Right ventricle myocardium superior (tissue), 1 donor: ENCODE measurements at regions of chr11 and their contacts with region 1.

Region 1: GRCh38 chr11:85826116-85826855 is 15.3 kb upstream of the SYTL2 start:
- DNase-seq: peak; percentile 55
- ATAC-seq: peak; percentile 38

Region 2: GRCh38 chr11:85595285-85595884 is 230.9 kb before region 1 on chr11:
- intact Hi-C with region 1: loop called (anchors 10 kb)
- DNase-seq: no peak
- ATAC-seq: peak; percentile 67

Region 3: DNA sequence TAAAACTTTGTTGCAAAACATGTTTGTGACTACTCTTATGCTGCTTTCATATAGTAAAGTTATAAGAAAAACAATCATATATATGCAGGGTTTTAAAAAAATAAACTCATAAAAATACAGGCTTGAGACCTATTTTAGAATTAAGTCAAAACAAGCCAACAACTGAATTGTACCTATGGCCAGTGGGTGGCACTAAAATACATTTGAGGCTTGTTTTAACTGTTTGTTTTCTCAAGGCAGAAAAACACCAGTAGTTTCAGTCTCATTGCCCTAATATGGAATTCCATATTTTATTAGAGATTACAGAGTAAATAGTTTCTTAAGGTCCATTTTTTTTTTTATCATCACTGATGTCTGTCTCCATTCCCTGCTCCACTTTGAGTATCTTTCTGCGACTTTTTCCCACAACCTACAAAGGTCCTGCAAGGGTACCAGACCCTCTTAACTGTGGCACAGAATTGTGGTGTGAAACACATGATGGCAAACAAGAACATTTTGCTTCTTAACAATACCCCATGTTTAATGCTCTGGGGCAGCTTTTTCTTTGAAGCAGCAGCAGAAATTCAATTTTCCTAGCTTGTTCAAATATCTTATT is 131.8 kb before region 1 on chr11:
- intact Hi-C with region 1: no loop called
- DNase-seq: no peak
- ATAC-seq: no peak